ENCODE measurements at regions of chr13 and their contacts with region 1.

Region 1: DNA sequence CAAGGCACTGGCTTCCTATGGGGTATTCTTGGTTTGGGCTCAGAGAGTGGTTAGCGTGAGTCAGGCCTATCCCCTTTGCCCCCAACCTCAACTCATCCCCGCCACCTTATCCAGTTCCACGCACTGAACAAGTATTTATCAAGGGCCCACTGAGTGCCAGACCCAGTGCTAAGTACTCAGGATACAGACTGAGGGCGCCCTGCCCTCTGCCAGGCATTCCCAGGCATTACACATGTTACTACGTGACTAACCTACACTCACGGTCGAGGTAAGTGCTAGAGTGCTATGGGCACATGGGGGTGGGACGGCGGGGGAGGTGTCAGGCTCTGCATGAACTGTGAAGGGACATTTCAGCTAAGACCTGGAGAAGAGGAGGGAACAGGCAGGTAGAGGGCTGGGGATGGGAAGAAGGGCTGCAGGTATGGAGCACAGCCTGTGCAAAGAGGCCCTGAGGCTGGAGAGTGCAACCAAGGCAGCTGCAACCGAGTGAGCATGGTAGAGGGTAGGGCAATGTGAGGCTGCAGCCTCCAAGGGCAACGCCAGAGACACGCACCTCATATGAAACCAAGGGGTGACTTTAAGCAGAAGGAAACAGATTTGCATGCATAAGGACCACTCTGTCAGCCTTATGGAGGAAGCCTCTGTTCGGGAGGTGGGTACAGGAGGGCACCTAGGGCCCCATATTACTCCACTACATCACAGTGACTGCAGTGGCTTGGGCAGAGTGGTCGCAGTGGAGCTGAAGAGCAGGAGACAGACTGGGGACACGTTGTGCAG is 22.5 kb downstream of the DHRS12 start:
- DNase-seq: peak; percentile 70
- H3K4me3 Mint-ChIP-seq: no peak overlapping the region
- H3K27ac Mint-ChIP-seq: peak overlapping the region; percentile 33
- H3K4me1 Mint-ChIP-seq: peaks cover 11% of the 10 kb centered on the region
- H3K27me3 Mint-ChIP-seq: no peaks in the 10 kb centered on the region
- CTCF ChIP-seq: peak; percentile 43

Region 2: GRCh38 chr13:50635504-50635903 is 1145.9 kb before region 1 on chr13:
- CTCF ChIA-PET with region 1: no interaction called
- POLR2A ChIA-PET with region 1: no interaction called
- intact Hi-C with region 1: no loop called
- DNase-seq: no peak
- H3K4me3 Mint-ChIP-seq: no peak overlapping the region
- H3K27ac Mint-ChIP-seq: no peak overlapping the region
- H3K4me1 Mint-ChIP-seq: no peaks in the 10 kb centered on the region
- H3K27me3 Mint-ChIP-seq: no peaks in the 10 kb centered on the region
- CTCF ChIP-seq: no peak

Region 3: GRCh38 chr13:51435002-51435578 is 346.3 kb before region 1 on chr13:
- CTCF ChIA-PET with region 1: interaction called, 4 read pairs
- POLR2A ChIA-PET with region 1: interaction called, 3 read pairs
- intact Hi-C with region 1: loop called (anchors 1 kb)
- DNase-seq: peak; percentile 17
- H3K4me3 Mint-ChIP-seq: no peak overlapping the region
- H3K27ac Mint-ChIP-seq: no peak overlapping the region
- H3K4me1 Mint-ChIP-seq: no peaks in the 10 kb centered on the region
- H3K27me3 Mint-ChIP-seq: no peaks in the 10 kb centered on the region
- CTCF ChIP-seq: peak; percentile 43